Mammary epithelial cell (primary cell): ENCODE measurements at regions of chr17 and their contacts with region 1.

Region 1: DNA sequence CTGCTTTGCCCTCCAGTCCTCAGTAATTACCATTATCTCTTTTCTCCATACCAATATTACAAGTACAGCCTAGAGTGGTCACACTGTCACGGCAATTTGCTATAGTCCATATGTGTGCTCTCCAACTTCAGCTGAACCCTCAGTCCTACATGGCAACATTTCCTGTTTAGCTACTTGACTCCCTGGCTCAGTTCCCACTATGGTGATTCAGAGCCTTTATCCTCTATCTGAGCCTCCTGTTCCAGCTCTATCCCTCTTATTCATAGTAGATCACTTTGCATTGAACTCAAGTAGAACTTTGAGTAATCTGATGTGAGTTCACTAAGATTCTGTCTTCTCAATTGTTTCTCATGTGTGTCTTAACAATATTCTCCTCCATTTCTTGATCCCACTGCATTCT is 43.7 kb upstream of the GOSR1 start:
- DNase-seq: peak; percentile 85
- H3K4me3 ChIP-seq: no peak overlapping the region
- H3K27ac ChIP-seq: no peak overlapping the region
- H3K4me1 ChIP-seq: peaks cover 8% of the 10 kb centered on the region
- H3K27me3 ChIP-seq: no peaks in the 10 kb centered on the region
- CTCF ChIP-seq: no peak

Region 2: GRCh38 chr17:29495011-29495410 is 938.5 kb before region 1 on chr17:
- CTCF ChIA-PET with region 1: interaction called, 22 read pairs
- dilution Hi-C with region 1: no loop called
- in situ Hi-C with region 1: no loop called
- intact Hi-C with region 1: no loop called
- DNase-seq: peak; percentile 44
- H3K4me3 ChIP-seq: no peak overlapping the region
- H3K27ac ChIP-seq: no peak overlapping the region
- H3K4me1 ChIP-seq: no peaks in the 10 kb centered on the region
- H3K27me3 ChIP-seq: no peaks in the 10 kb centered on the region
- CTCF ChIP-seq: no peak

Region 3: DNA sequence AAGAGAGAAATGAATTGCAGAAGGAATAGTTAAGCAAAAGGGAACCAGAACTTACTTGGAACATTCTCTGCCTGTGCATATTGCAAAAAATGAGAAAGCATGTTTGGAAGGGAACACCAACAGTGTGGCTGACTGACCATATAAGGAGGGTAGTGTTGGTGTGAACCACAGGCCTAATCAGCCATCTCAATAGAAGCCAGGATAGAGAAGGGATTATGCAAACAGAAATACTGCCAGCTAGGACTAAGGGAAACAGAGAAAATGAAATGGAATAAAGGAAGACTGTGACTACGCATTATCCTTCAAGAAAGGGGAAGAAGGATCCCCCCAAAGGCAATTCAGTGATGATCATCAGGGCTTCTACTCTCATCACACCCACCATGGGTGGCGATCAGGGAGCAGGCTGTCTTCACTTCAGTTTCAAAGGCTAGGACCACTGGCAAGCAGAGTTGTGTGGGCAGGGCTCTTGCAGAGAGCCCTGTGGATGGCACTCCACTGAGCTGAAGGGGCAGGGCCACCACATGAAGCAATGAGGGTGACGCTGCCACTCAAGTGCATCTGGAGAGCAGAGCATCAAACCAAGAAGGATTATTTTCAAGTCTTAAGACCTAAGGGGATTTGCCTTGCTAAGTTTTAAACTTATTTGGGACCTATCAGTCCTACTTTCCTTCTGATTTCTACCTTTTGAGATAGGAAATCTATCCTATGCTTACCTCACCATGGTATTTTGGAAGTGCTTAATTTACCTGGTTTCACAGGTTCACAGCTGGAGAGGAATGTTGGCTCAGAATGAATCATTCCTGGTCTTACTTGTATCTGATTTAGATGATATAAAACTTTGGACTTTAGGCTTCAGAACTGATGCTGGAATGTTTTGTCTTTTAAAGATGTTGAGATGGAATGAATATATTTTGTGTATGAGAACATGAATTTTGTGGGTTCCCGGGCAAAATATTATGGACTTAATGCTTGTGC is 644.0 kb before region 1 on chr17:
- CTCF ChIA-PET with region 1: no interaction called
- dilution Hi-C with region 1: no loop called
- in situ Hi-C with region 1: no loop called
- intact Hi-C with region 1: no loop called
- DNase-seq: peak; percentile 23
- H3K4me3 ChIP-seq: no peak overlapping the region
- H3K27ac ChIP-seq: no peak overlapping the region
- H3K4me1 ChIP-seq: peaks cover 13% of the 10 kb centered on the region
- H3K27me3 ChIP-seq: no peaks in the 10 kb centered on the region
- CTCF ChIP-seq: no peak